ENCODE measurements at regions of chr3 and their contacts with region 1.

Region 1: GRCh38 chr3:108477511-108478147 is 32.8 kb downstream of the MYH15 start:
- DNase-seq: peak; percentile 64
- H3K4me3 ChIP-seq: no peak overlapping the region
- H3K27ac ChIP-seq: no peak overlapping the region
- H3K4me1 ChIP-seq: no peaks in the 10 kb centered on the region
- CTCF ChIP-seq: peak; percentile 92

Region 2: DNA sequence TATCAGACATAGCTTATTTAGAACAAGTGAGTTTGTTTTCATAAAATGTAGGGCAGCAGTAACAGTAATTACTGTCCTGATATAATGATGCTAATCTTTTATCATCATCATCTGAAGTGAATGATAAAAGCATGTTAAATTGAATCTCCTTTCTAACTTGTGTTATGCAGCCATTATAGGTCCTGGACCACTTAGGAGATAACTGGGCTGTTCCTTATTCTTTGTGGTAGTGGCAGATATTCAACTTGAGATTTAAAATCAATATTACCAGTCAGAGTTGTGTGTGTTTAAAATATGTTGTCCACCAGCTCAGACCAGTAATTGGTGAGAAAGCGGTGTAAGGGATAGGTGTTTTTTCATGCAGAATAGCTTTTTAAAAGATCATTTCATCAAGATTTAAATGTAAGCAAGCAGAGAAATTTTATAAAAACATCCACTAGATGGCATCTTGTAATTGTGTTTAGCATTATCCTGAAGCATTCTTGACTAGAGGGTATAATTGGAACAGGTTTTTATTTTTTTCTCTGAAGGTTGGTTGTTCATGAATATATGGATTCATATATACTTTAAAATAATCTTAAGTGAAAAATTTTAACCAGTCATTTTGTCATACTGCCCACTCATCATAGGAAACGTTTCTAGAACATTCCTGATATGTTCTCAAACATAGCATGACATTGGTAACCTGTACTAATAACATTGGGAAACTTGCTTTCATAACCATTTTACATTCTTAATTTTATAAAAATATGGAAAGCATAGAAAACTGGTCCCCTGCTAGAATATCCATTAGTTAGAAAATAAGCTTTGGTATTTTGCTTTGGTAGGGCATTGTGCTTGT is 800.9 kb before region 1 on chr3:
- CTCF ChIA-PET with region 1: no interaction called
- POLR2A ChIA-PET with region 1: no interaction called
- intact Hi-C with region 1: loop called (anchors 5 kb)
- DNase-seq: peak; percentile 63
- H3K4me3 ChIP-seq: no peak overlapping the region
- H3K27ac ChIP-seq: no peak overlapping the region
- H3K4me1 ChIP-seq: peaks cover 26% of the 10 kb centered on the region
- CTCF ChIP-seq: peak; percentile 90

Region 3: DNA sequence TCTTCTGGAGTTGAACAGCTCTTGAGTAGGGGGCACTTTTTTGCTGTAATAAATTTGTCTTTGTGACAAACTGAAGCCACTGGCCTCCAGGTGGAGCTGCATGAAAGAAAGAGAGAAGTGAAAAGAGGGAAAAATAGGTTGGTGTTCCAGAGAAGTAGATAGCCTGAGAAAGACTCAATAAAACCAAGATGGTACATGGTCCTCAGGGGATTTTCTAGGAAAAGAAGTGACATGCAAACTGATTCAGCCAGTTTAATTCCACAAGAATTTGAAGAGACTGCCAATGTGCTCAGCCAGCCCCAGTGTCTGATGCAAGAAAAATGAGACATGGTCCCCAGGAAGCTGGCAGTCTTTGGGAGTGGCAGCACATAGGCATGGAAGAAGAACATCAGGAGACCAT is 539.5 kb before region 1 on chr3:
- CTCF ChIA-PET with region 1: no interaction called
- POLR2A ChIA-PET with region 1: interaction called, 5 read pairs
- intact Hi-C with region 1: loop called (anchors 1 kb)
- DNase-seq: peak; percentile 27
- H3K4me3 ChIP-seq: no peak overlapping the region
- H3K27ac ChIP-seq: no peak overlapping the region
- H3K4me1 ChIP-seq: no peaks in the 10 kb centered on the region
- CTCF ChIP-seq: peak; percentile 75

Region 4: DNA sequence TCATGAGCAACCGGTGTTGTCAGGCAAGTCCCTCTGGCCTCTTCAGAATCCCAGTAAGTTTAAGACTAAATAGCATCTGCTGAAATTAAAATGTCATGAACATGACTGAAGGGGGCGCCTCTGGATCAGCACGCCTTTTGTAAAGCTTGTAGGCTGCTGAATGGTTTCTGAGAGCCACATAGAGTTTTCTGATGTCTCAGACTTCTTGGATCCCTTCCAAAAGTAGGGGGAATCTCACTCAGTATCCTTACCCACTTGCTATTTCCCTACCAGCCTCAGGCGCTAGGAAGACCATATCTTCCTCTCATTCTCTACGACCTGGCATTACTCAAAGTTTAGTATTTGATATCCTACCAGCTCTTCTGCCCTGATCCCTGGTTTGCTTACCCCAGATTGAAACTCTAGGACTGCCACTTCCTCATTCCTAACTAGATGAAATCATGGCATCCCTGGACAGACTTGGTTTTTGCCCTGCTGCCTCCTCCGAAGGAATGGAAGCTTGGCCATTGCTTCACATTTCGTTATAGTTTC is 324.1 kb before region 1 on chr3:
- CTCF ChIA-PET with region 1: no interaction called
- POLR2A ChIA-PET with region 1: no interaction called
- intact Hi-C with region 1: loop called (anchors 1 kb)
- DNase-seq: peak; percentile 50
- H3K4me3 ChIP-seq: no peak overlapping the region
- H3K27ac ChIP-seq: no peak overlapping the region
- H3K4me1 ChIP-seq: no peaks in the 10 kb centered on the region
- CTCF ChIP-seq: peak; percentile 76

Measured in OCI-LY7 (cell line).